ENCODE measurements at regions of chr15 and their contacts with region 1.

Region 1: GRCh38 chr15:65184868-65185738 is at the start of gene CLPX:
- DNase-seq: peak; percentile 92
- ATAC-seq: peak; percentile 88
- H3K4me3 ChIP-seq: peak within 1 kb of the TSS; percentile 88 to 94
- H3K27ac ChIP-seq: peak within 1 kb of the TSS; percentile 84
- H3K4me1 ChIP-seq: peaks cover 15 to 26% of the 10 kb centered on the region in 2 experiments
- H3K27me3 ChIP-seq: no peaks in the 10 kb centered on the region
- CTCF ChIP-seq: no peak
- POLR2A ChIP-seq: peak; percentile 24
- RAD21 ChIP-seq: no peak
- total RNA-seq, gene CLPX: 64.1 TPM

Region 2: GRCh38 chr15:65028921-65029735 is 156.0 kb before region 1 on chr15 and contains the start of gene MTFMT:
- CTCF ChIA-PET with region 1: interaction called, 7 read pairs
- POLR2A ChIA-PET with region 1: no interaction called
- RAD21 ChIA-PET with region 1: no interaction called
- intact Hi-C with region 1: loop called (anchors 5 kb)
- DNase-seq: peak; percentile 53
- ATAC-seq: peak; percentile 82
- H3K4me3 ChIP-seq: peak within 1 kb of the TSS; percentile 92 to 96
- H3K27ac ChIP-seq: peak within 1 kb of the TSS; percentile 72
- H3K4me1 ChIP-seq: peaks cover 7 to 30% of the 10 kb centered on the region in 2 experiments; a peak in 3 of 4 replicates
- H3K27me3 ChIP-seq: no peaks in the 10 kb centered on the region
- CTCF ChIP-seq: no peak
- POLR2A ChIP-seq: peak; percentile 92
- RAD21 ChIP-seq: no peak
- total RNA-seq, gene MTFMT: 30.4 TPM

Region 3: GRCh38 chr15:65275728-65276126 is 90.6 kb after region 1 on chr15:
- CTCF ChIA-PET with region 1: interaction called, 4 read pairs
- POLR2A ChIA-PET with region 1: interaction called, 3 read pairs
- RAD21 ChIA-PET with region 1: interaction called in 1 of 2 experiments, 3 read pairs
- intact Hi-C with region 1: loop called (anchors 1 kb)
- DNase-seq: no peak
- ATAC-seq: peak; percentile 53
- H3K4me3 ChIP-seq: peak overlapping the region in 1 of 2 experiments; percentile 8; a peak in 1 of 4 replicates
- H3K27ac ChIP-seq: peak overlapping the region; percentile 2; the same call in 1 of the 2 replicates
- H3K4me1 ChIP-seq: peaks cover 7 to 19% of the 10 kb centered on the region in 2 experiments
- H3K27me3 ChIP-seq: no peaks in the 10 kb centered on the region
- CTCF ChIP-seq: no peak
- POLR2A ChIP-seq: no peak
- RAD21 ChIP-seq: no peak

Region 4: DNA sequence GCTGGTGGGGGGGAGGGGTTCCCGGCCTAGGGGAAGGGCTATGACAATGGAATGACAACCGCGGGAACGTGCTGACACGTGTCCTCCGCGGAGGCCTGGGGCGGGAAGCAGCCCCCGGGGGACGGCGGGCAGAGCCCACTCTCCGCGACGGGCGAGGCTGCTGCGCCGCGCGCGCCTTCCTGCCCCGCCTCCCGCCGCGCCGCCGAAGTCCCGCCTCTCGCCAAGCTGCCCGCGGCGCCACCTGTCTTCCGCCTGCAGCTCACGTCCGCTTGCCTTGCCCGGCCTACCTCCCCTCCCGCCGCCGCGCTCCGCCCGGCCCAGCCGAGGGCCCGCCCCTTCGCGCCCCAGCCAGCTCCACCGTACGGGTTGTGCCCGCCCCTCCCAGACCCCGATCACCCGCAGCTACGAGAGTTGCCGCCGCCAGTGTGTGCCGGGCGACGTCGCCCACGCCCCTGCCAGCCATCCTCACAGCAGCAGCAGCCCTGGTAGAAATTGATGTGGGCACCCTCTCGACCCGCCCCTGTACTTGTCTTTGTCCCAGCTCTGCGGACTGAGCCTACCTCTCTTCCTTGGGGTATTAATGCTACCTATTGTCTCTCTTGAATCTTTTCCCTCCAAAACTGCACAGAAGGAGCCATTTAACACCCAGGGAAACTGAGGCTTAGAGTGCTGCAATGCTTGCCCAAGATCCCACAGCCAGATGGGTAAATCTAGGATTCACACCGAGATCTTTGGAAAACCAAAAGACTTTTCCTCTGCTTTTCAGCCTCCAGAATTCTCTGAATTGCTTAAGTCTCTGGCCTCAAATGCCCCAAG is 101.8 kb after region 1 on chr15 and contains the start of gene PARP16:
- CTCF ChIA-PET with region 1: interaction called, 3 read pairs
- POLR2A ChIA-PET with region 1: interaction called, 12 read pairs
- RAD21 ChIA-PET with region 1: no interaction called
- intact Hi-C with region 1: no loop called
- DNase-seq: peak; percentile 73
- ATAC-seq: peak; percentile 96
- H3K4me3 ChIP-seq: peak within 1 kb of the TSS; percentile 64 to 87
- H3K27ac ChIP-seq: peak within 1 kb of the TSS; percentile 73
- H3K4me1 ChIP-seq: peaks cover 11 to 20% of the 10 kb centered on the region in 2 experiments
- H3K27me3 ChIP-seq: no peaks in the 10 kb centered on the region
- CTCF ChIP-seq: peak in 1 of 3 experiments; percentile 35; a peak in 3 of 6 replicates
- POLR2A ChIP-seq: peak; percentile 16
- RAD21 ChIP-seq: no peak
- total RNA-seq, gene PARP16: 9.7 TPM

Region 5: GRCh38 chr15:65298731-65299130 is 113.6 kb after region 1 on chr15:
- CTCF ChIA-PET with region 1: interaction called, 14 read pairs
- POLR2A ChIA-PET with region 1: interaction called, 23 read pairs
- RAD21 ChIA-PET with region 1: interaction called, 3 read pairs
- intact Hi-C with region 1: loop called (anchors 1 kb)
- DNase-seq: no peak
- ATAC-seq: no peak
- H3K4me3 ChIP-seq: no peak overlapping the region
- H3K27ac ChIP-seq: no peak overlapping the region
- H3K4me1 ChIP-seq: peaks cover 17 to 33% of the 10 kb centered on the region in 2 experiments
- H3K27me3 ChIP-seq: no peaks in the 10 kb centered on the region
- CTCF ChIP-seq: no peak
- POLR2A ChIP-seq: no peak
- RAD21 ChIP-seq: no peak

Region 6: GRCh38 chr15:65384895-65385858 is 200.1 kb after region 1 on chr15:
- CTCF ChIA-PET with region 1: interaction called, 6 read pairs
- POLR2A ChIA-PET with region 1: interaction called, 3 read pairs
- RAD21 ChIA-PET with region 1: no interaction called
- intact Hi-C with region 1: loop called (anchors 1 kb)
- DNase-seq: peak; percentile 74
- ATAC-seq: peak; percentile 87
- H3K4me3 ChIP-seq: peak overlapping the region; percentile 39 to 59
- H3K27ac ChIP-seq: peak overlapping the region; percentile 70
- H3K4me1 ChIP-seq: peaks cover 8 to 21% of the 10 kb centered on the region in 2 experiments
- H3K27me3 ChIP-seq: no peaks in the 10 kb centered on the region; the same call in 1 of the 2 replicates
- CTCF ChIP-seq: peak; percentile 88 to 97 (median 93)
- POLR2A ChIP-seq: no peak
- RAD21 ChIP-seq: peak; percentile 93

Region 7: GRCh38 chr15:65400760-65401610 is 215.9 kb after region 1 on chr15:
- CTCF ChIA-PET with region 1: no interaction called
- POLR2A ChIA-PET with region 1: interaction called, 6 read pairs
- RAD21 ChIA-PET with region 1: interaction called in 1 of 2 experiments, 4 read pairs
- intact Hi-C with region 1: loop called (anchors 5 kb)
- DNase-seq: peak; percentile 56
- ATAC-seq: peak; percentile 95
- H3K4me3 ChIP-seq: no peak overlapping the region
- H3K27ac ChIP-seq: no peak overlapping the region
- H3K4me1 ChIP-seq: peaks cover 6 to 20% of the 10 kb centered on the region in 2 experiments
- H3K27me3 ChIP-seq: no peaks in the 10 kb centered on the region
- CTCF ChIP-seq: peak; percentile 73 to 96 (median 80); a peak in 5 of 6 replicates
- POLR2A ChIP-seq: no peak
- RAD21 ChIP-seq: peak; percentile 85

Measured in HCT116 (cell line).